MCF 10A (cell line): ENCODE measurements at regions of chr17 and their contacts with region 1.

Region 1: GRCh38 chr17:43846221-43846712 is 709 bp upstream of the CD300LG start:
- DNase-seq: peak; percentile 76
- H3K4me3 Mint-ChIP-seq: no peak overlapping the region
- H3K27ac Mint-ChIP-seq: no peak overlapping the region
- H3K4me1 Mint-ChIP-seq: no peaks in the 10 kb centered on the region
- H3K27me3 Mint-ChIP-seq: peaks cover 5% of the 10 kb centered on the region
- CTCF ChIP-seq: peak; percentile 96

Region 2: GRCh38 chr17:43694077-43694870 is 152.0 kb before region 1 on chr17:
- CTCF ChIA-PET with region 1: interaction called, 24 read pairs
- POLR2A ChIA-PET with region 1: no interaction called
- intact Hi-C with region 1: loop called (anchors 2 kb)
- DNase-seq: peak; percentile 86
- H3K4me3 Mint-ChIP-seq: no peak overlapping the region
- H3K27ac Mint-ChIP-seq: no peak overlapping the region
- H3K4me1 Mint-ChIP-seq: no peaks in the 10 kb centered on the region
- H3K27me3 Mint-ChIP-seq: no peaks in the 10 kb centered on the region
- CTCF ChIP-seq: peak; percentile 84

Region 3: GRCh38 chr17:43766413-43767052 is 79.7 kb before region 1 on chr17:
- CTCF ChIA-PET with region 1: interaction called, 8 read pairs
- POLR2A ChIA-PET with region 1: interaction called, 3 read pairs
- intact Hi-C with region 1: loop called (anchors 1 kb)
- DNase-seq: peak; percentile 69
- H3K4me3 Mint-ChIP-seq: no peak overlapping the region
- H3K27ac Mint-ChIP-seq: no peak overlapping the region
- H3K4me1 Mint-ChIP-seq: no peaks in the 10 kb centered on the region
- H3K27me3 Mint-ChIP-seq: no peaks in the 10 kb centered on the region
- CTCF ChIP-seq: peak; percentile 60

Region 4: GRCh38 chr17:43791589-43791988 is 54.7 kb before region 1 on chr17:
- CTCF ChIA-PET with region 1: interaction called, 18 read pairs
- POLR2A ChIA-PET with region 1: no interaction called
- intact Hi-C with region 1: loop called (anchors 2 kb)
- DNase-seq: peak; percentile 77
- H3K4me3 Mint-ChIP-seq: peak overlapping the region; percentile 33
- H3K27ac Mint-ChIP-seq: no peak overlapping the region
- H3K4me1 Mint-ChIP-seq: peaks cover 5% of the 10 kb centered on the region
- H3K27me3 Mint-ChIP-seq: peaks cover 20% of the 10 kb centered on the region
- CTCF ChIP-seq: no peak

Region 5: DNA sequence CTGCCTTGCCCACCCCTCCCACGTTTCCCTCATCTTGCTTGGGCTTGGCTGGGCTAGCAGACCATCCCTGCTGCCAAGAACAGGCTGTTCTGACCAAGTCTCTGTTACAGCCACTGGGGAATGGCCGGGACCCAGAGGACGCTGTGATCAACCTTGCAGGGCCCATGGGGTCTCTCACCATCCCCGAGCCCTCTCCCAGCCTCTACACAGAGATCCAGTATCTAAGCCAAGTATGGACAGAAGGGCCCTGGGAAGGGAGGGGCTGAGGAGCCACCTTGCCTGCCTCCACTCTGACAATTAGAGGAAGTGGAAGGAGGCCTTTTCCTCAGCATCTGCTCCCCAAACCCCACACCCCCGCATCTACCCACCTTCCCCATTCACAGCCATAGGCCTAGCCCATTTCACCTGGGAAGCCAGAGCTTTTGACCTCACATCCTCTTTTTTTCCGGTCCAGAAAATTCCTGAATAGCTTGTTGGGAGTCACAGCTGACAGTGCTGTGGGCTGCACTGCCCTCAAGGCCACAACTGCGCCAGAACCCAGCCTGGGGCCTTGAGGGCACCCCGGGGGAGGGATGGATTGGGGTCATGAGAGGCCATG is 14.9 kb after region 1 on chr17:
- CTCF ChIA-PET with region 1: interaction called, 15 read pairs
- POLR2A ChIA-PET with region 1: no interaction called
- intact Hi-C with region 1: no loop called
- DNase-seq: no peak
- H3K4me3 Mint-ChIP-seq: no peak overlapping the region
- H3K27ac Mint-ChIP-seq: no peak overlapping the region
- H3K4me1 Mint-ChIP-seq: no peaks in the 10 kb centered on the region
- H3K27me3 Mint-ChIP-seq: peaks cover 27% of the 10 kb centered on the region
- CTCF ChIP-seq: no peak